Endothelial cell of umbilical vein (primary cell): ENCODE measurements at regions of chr16 and their contacts with region 1.

Region 1: GRCh38 chr16:46689365-46690280 is at the start of gene ORC6:
- DNase-seq: peak; percentile 80
- H3K4me3 ChIP-seq: peak within 1 kb of the TSS; percentile 66 to 96 (median 81)
- H3K27ac ChIP-seq: peak within 1 kb of the TSS; percentile 70
- H3K4me1 ChIP-seq: peaks cover 30% of the 10 kb centered on the region
- H3K27me3 ChIP-seq: no peaks in the 10 kb centered on the region
- CTCF ChIP-seq: peak; percentile 36 to 70
- POLR2A ChIP-seq: no peak
- total RNA-seq, gene ORC6: 31.1 and 34.9 TPM in 2 replicates

Region 2: GRCh38 chr16:46621006-46621933 is 68.4 kb before region 1 on chr16 and contains the start of gene SHCBP1:
- CTCF ChIA-PET with region 1: no interaction called
- POLR2A ChIA-PET with region 1: no interaction called
- dilution Hi-C with region 1: no loop called
- intact Hi-C with region 1: loop called (anchors 2 kb)
- DNase-seq: peak; percentile 88
- H3K4me3 ChIP-seq: peak within 1 kb of the TSS; percentile 76 to 80 (median 77)
- H3K27ac ChIP-seq: peak within 1 kb of the TSS; percentile 62
- H3K4me1 ChIP-seq: peaks cover 5% of the 10 kb centered on the region
- H3K27me3 ChIP-seq: no peaks in the 10 kb centered on the region
- CTCF ChIP-seq: peak in 1 of 2 donors; percentile 3
- POLR2A ChIP-seq: peak; percentile 65
- total RNA-seq, gene SHCBP1: 42.2 and 44.9 TPM in 2 replicates

Region 3: DNA sequence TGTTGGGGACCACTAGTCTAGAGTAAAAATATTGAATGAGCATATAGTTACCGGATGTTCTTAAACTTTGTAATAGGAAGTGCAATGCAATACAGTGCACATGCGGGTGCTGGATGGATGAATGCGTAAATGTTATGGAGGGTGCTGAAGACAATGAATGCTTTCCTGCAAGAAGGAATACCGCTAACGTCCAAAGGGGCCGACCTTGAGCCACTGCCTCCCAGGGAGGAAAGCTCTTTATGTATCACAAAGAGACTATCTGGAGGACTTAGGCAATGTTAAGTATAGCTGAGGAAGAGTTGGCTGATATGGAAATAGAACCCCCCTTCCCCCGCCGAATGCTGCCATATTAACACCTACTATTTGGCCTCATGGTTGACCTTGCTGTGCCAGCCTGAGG is 41.0 kb before region 1 on chr16:
- CTCF ChIA-PET with region 1: no interaction called
- POLR2A ChIA-PET with region 1: no interaction called
- dilution Hi-C with region 1: no loop called
- intact Hi-C with region 1: no loop called
- DNase-seq: no peak
- H3K4me3 ChIP-seq: no peak overlapping the region
- H3K27ac ChIP-seq: no peak overlapping the region
- H3K4me1 ChIP-seq: no peaks in the 10 kb centered on the region
- H3K27me3 ChIP-seq: no peaks in the 10 kb centered on the region
- CTCF ChIP-seq: no peak
- POLR2A ChIP-seq: no peak

Region 4: DNA sequence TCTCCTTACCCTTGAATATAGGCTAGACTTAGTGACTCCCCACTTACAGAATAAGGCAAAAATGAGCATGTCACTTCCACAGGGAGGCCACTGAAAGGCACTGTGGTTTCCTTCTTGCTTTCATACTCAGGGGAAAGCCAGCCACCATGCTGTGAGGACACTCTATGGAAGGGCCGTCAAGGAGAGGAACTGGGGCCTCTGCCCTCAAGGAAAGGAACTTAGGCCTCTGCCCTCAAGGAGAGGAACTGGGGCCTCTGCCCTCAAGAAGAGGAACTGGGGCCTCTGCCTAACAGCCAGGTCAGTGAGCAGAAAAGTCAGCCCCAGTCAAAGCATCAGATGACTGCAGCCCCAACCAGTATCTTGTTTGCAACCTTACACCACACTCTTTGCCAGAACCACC is 30.7 kb before region 1 on chr16:
- CTCF ChIA-PET with region 1: no interaction called
- POLR2A ChIA-PET with region 1: no interaction called
- dilution Hi-C with region 1: no loop called
- intact Hi-C with region 1: no loop called
- DNase-seq: no peak
- H3K4me3 ChIP-seq: no peak overlapping the region
- H3K27ac ChIP-seq: no peak overlapping the region
- H3K4me1 ChIP-seq: no peaks in the 10 kb centered on the region
- H3K27me3 ChIP-seq: no peaks in the 10 kb centered on the region
- CTCF ChIP-seq: no peak
- POLR2A ChIP-seq: no peak

Region 5: DNA sequence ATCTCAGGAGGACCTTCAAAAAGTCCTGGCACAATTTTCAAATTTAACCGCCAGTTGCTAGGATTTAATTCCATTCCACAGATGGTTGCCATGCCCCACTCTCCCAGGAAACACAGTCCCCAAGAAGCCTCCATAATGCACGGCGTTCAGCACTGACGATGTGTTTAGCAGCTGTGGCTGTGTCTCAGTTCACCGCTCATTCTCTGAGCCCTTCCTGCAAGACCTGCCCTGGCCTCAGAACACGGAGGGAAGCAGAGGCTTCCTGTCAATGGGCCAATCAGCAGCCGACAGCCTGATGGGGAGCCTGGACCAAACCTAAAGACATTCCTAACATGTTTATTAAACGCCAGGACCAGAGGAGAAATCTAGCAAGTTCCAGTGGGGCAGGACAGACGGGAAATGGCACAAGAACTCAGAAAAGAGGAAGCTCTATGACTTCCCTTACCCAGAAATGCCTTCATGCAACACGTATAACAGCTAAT is 53.7 kb after region 1 on chr16:
- CTCF ChIA-PET with region 1: no interaction called
- POLR2A ChIA-PET with region 1: no interaction called
- dilution Hi-C with region 1: no loop called
- intact Hi-C with region 1: loop called (anchors 5 kb)
- DNase-seq: peak; percentile 25
- H3K4me3 ChIP-seq: no peak overlapping the region
- H3K27ac ChIP-seq: no peak overlapping the region
- H3K4me1 ChIP-seq: peaks cover 4% of the 10 kb centered on the region
- H3K27me3 ChIP-seq: no peaks in the 10 kb centered on the region
- CTCF ChIP-seq: no peak
- POLR2A ChIP-seq: no peak

Region 6: GRCh38 chr16:46801428-46802049 is 111.9 kb after region 1 on chr16:
- CTCF ChIA-PET with region 1: interaction called, 9 read pairs
- POLR2A ChIA-PET with region 1: no interaction called
- dilution Hi-C with region 1: no loop called
- intact Hi-C with region 1: loop called (anchors 5 kb)
- DNase-seq: peak; percentile 18
- H3K4me3 ChIP-seq: no peak overlapping the region
- H3K27ac ChIP-seq: no peak overlapping the region
- H3K4me1 ChIP-seq: no peaks in the 10 kb centered on the region
- H3K27me3 ChIP-seq: no peaks in the 10 kb centered on the region
- CTCF ChIP-seq: peak; percentile 7 to 31
- POLR2A ChIP-seq: no peak

Region 7: DNA sequence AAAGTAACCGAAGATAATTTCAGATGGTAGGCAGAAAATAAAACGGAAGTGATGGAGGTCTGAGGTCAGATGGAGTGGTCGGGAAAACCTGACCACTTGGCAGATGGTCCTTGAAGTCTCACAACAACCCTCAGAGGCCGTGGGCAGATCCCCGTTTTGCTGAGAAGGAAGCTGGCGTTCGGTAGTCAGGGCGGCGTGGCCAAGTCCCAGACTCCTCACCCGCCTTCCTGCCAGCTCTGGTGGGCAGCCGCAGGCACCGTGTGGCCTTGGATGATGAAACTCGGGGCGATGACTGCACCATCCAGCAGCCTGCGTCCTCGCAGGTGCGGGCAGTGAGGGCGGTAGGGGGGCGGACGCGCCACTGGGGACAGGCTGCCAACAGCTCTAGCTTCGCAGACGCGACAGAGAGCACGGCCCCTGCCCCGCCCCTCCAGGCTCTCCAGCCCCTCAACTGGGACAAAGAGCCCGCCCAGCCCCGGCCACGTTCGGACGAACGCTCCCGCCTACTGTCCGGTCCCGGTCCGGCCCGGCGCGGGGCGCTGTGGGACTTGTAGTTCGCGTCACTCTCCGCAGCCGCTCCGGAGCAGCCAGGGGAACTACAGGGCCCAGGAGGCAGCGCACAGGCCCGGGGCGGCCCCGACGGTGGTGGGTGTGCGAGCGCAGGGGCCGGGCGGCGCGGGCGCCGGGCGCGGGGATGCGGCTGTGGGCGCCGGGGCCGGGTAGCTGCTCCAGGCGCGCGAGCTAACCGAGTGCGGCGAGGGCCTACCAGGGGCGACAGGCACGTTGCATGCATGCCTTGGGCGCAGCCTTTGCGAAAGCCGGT is 194.3 kb after region 1 on chr16 and contains the start of gene GPT2:
- CTCF ChIA-PET with region 1: no interaction called
- POLR2A ChIA-PET with region 1: no interaction called
- dilution Hi-C with region 1: no loop called
- intact Hi-C with region 1: loop called (anchors 2 kb)
- DNase-seq: peak; percentile 97
- H3K4me3 ChIP-seq: peak within 1 kb of the TSS; percentile 18 to 72 (median 62)
- H3K27ac ChIP-seq: no peak within 1 kb of the TSS
- H3K4me1 ChIP-seq: peaks cover 3% of the 10 kb centered on the region
- H3K27me3 ChIP-seq: peaks cover 6 to 15% of the 10 kb centered on the region in 2 experiments
- CTCF ChIP-seq: no peak
- POLR2A ChIP-seq: peak; percentile 38
- total RNA-seq, gene GPT2: 16.1 and 17.9 TPM in 2 replicates

Region 8: GRCh38 chr16:46973207-46973995 is 283.8 kb after region 1 on chr16 and contains the start of gene DNAJA2:
- CTCF ChIA-PET with region 1: no interaction called
- POLR2A ChIA-PET with region 1: no interaction called
- dilution Hi-C with region 1: no loop called
- intact Hi-C with region 1: loop called (anchors 2 kb)
- DNase-seq: peak; percentile 91
- H3K4me3 ChIP-seq: peak within 1 kb of the TSS; percentile 76 to 94 (median 89)
- H3K27ac ChIP-seq: peak within 1 kb of the TSS; percentile 18
- H3K4me1 ChIP-seq: peaks cover 19% of the 10 kb centered on the region
- H3K27me3 ChIP-seq: no peaks in the 10 kb centered on the region
- CTCF ChIP-seq: no peak
- POLR2A ChIP-seq: peak; percentile 91
- total RNA-seq, gene DNAJA2: 57.5 and 61.4 TPM in 2 replicates